Natural killer cell (primary cell): ENCODE measurements at regions of chr15 and their contacts with region 1.

Region 1: DNA sequence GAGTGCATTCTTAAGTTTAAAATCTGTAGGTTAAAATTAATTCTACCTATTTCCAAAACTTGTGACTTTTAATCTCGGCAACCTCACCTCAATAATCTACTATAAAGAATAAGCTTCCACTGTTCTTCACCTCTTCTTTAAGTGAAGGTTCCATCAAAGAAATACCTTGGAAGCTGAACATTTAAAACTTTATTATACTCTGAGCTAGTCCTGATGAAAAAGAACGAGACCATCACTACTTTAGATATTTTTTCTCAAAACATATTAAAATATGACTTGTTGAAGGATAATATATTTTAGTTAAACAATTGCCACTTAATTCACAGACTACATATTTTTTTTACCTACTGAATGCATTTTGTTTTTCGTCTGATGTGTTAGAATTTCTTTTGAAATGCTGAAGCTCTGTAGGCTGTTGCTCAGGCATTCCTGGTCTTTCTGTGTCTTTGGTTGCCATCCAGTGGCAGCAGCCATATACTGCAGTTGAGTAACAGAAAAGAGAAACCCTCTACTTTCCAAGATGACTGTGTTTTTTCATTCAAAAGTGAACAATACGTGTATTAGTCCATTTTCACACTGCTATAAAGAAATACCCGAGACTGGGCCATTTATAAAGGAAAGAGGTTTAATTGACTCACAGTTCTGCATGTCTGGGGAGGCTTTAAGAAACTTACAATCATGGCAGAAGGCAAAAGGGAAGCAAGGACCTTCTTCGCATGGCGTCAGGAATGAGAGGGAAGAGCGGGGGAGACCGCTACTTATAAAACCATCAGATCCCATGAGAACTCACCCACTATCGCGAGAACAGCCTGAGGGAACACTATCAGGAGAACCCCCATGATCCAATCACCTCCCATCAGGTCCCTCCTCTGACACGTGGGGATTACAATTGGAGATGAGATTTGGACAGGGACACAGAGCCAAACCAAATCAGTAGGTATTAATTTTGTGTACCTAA is 4.5 kb upstream of the GOLGA8B start:
- DNase-seq: peak; percentile 40 to 81
- ATAC-seq: peak; percentile 65 to 80 (median 65)
- H3K4me3 ChIP-seq: no peak overlapping the region
- H3K4me3 Mint-ChIP-seq: peak overlapping the region; percentile 45
- H3K27ac ChIP-seq: no peak overlapping the region
- H3K27ac Mint-ChIP-seq: no peak overlapping the region
- H3K4me1 ChIP-seq: peaks cover 10% of the 10 kb centered on the region
- H3K4me1 Mint-ChIP-seq: peaks cover 5 to 10% of the 10 kb centered on the region in 2 donors
- H3K27me3 ChIP-seq: peaks cover 4% of the 10 kb centered on the region
- H3K27me3 Mint-ChIP-seq: peaks cover 7 to 18% of the 10 kb centered on the region in 2 donors
- CTCF ChIP-seq: peak; percentile 84

Region 2: DNA sequence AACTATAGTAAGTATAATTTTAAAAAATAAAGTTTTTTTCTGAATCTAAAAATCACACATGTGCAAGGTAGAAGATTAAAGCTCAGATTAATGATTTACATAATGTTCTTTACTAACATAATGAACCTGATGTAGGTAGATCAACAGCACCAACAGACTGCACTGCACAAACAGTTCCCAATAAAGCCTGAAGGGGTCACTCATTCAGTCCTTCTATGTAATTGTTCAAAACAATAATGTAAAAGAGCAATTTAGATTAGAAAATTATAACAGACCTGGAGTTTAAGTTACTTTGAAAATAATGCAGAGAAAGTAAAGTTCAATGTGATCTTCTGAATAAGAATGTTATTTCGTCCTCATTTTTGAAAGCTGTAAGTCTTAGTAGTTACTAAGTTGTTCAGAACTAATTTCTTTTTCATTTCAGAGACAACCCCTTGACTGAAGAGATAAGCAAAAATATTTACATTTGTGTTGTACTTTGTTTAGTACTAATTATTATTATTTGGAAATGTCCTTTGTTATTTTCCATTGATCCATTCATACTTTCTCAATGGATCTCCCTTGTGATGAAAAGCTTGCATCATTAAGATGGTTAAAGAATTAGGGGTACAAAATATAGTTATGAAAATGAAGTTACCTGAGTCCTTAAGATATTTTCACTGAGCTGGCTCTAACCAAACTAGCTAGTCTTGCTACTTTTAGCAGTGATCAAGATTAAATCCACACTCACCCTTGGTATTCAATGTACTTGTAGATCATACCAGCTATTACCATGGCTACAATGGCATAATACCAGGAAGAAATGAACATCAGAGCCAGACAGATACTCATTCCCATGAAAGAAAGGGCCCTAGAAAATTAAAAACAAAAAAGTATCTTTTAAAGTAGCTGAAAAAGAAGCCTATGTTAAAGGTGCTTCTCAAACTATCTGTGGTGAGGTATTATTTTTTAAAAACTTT is 346.3 kb before region 1 on chr15:
- intact Hi-C with region 1: loop called (anchors 1 kb)
- DNase-seq: peak in 1 of 2 donors; percentile 76
- ATAC-seq: peak; percentile 78 to 88 (median 87)
- H3K4me3 ChIP-seq: no peak overlapping the region
- H3K4me3 Mint-ChIP-seq: no peak overlapping the region
- H3K27ac ChIP-seq: no peak overlapping the region
- H3K27ac Mint-ChIP-seq: no peak overlapping the region
- H3K4me1 ChIP-seq: no peaks in the 10 kb centered on the region
- H3K4me1 Mint-ChIP-seq: no peaks in the 10 kb centered on the region
- H3K27me3 ChIP-seq: no peaks in the 10 kb centered on the region
- H3K27me3 Mint-ChIP-seq: no peaks in the 10 kb centered on the region
- CTCF ChIP-seq: peak; percentile 88

Region 3: GRCh38 chr15:34456658-34457057 is 131.3 kb before region 1 on chr15:
- intact Hi-C with region 1: no loop called
- DNase-seq: no peak
- ATAC-seq: no peak
- H3K4me3 ChIP-seq: no peak overlapping the region
- H3K4me3 Mint-ChIP-seq: no peak overlapping the region
- H3K27ac ChIP-seq: no peak overlapping the region
- H3K27ac Mint-ChIP-seq: no peak overlapping the region
- H3K4me1 ChIP-seq: no peaks in the 10 kb centered on the region
- H3K4me1 Mint-ChIP-seq: no peaks in the 10 kb centered on the region
- H3K27me3 ChIP-seq: no peaks in the 10 kb centered on the region
- H3K27me3 Mint-ChIP-seq: peaks cover 18 to 54% of the 10 kb centered on the region in 2 donors
- CTCF ChIP-seq: no peak

Region 4: GRCh38 chr15:34514251-34514670 is 73.7 kb before region 1 on chr15:
- intact Hi-C with region 1: no loop called
- DNase-seq: peak in 1 of 2 donors; percentile 7
- ATAC-seq: peak; percentile 66 to 67 (median 66)
- H3K4me3 ChIP-seq: peak overlapping the region; percentile 56
- H3K4me3 Mint-ChIP-seq: peak overlapping the region; percentile 84
- H3K27ac ChIP-seq: no peak overlapping the region
- H3K27ac Mint-ChIP-seq: no peak overlapping the region
- H3K4me1 ChIP-seq: peaks cover 7% of the 10 kb centered on the region
- H3K4me1 Mint-ChIP-seq: peaks cover 20 to 21% of the 10 kb centered on the region in 2 donors
- H3K27me3 ChIP-seq: peaks cover 2% of the 10 kb centered on the region
- H3K27me3 Mint-ChIP-seq: peaks cover 22 to 39% of the 10 kb centered on the region in 2 donors
- CTCF ChIP-seq: no peak

Region 5: DNA sequence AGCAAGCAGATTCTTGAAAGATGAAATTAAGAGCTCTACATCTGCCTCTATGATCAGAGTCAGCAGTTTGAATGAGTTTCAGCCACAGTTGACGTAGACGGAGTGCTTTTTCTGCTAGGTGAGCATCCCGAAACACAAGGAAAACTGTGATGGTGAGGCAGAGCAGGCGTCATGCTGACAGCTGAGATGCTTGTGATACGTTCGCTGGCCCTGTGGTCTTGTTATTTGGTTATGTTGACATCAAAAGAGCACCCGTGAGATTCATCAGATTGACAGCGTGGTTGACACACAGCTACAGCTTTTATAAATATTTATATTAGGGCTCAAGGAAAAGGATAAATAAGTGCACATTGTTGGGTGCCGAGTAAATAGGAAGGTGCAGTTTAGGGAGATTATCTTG is 15.1 kb after region 1 on chr15:
- intact Hi-C with region 1: no loop called
- DNase-seq: no peak
- ATAC-seq: no peak
- H3K4me3 ChIP-seq: no peak overlapping the region
- H3K4me3 Mint-ChIP-seq: no peak overlapping the region
- H3K27ac ChIP-seq: no peak overlapping the region
- H3K27ac Mint-ChIP-seq: no peak overlapping the region
- H3K4me1 ChIP-seq: no peaks in the 10 kb centered on the region
- H3K4me1 Mint-ChIP-seq: no peaks in the 10 kb centered on the region
- H3K27me3 ChIP-seq: no peaks in the 10 kb centered on the region
- H3K27me3 Mint-ChIP-seq: peaks cover 28 to 38% of the 10 kb centered on the region in 2 donors
- CTCF ChIP-seq: no peak